ENCODE measurements at regions of chr20 and their contacts with region 1.

Region 1: DNA sequence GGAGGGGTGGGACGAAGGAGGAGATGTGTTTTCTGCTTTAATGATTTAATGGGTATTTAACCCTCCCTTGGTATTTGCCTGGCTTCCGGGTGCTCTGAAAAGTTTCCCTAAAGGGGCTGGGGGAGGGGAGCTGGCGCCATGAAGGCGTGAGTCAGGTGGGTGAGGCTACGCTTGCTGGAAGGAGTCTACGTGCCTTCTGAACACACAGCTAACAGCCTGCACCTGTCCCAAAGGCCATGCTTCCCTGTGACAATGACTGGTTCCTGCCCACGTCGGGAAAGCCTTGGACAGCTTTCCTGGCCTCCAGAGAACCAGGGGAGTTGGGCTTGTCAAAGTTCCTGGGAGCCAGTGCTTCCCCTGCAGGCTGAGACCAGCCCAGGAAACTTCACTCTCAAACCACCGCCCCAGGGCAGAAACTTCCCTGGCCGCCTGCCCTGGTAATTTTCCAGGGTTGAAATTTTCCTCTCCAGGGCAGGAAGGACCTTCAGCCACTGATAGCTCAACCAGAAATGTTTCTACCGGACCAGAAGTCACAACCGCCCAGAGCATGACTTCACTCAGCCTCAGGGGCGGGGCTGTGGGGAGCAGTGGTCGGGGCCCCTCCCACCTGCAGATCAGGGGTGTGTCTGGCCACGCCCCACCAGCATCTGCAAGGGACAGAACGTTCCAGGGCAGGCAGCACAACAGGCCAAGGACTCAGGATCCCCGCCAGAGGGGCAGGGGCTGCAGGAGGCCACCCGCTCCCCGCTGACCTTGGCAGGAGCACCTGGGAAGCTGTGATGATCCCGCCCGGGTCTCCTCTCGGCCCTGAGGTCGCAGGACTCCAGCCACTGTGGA is 18.6 kb upstream of the SLCO4A1 start:
- DNase-seq: peak; percentile 83 to 90 (median 87)
- H3K4me3 ChIP-seq: peak overlapping the region in 4 of 7 experiments; percentile 48 to 57 (median 49)
- H3K27ac ChIP-seq: peak overlapping the region; percentile 74 to 86
- H3K4me1 ChIP-seq: peaks cover 0 to 77% (median 71%) of the 10 kb centered on the region in 4 experiments
- H3K27me3 ChIP-seq: no peaks in the 10 kb centered on the region

Region 2: DNA sequence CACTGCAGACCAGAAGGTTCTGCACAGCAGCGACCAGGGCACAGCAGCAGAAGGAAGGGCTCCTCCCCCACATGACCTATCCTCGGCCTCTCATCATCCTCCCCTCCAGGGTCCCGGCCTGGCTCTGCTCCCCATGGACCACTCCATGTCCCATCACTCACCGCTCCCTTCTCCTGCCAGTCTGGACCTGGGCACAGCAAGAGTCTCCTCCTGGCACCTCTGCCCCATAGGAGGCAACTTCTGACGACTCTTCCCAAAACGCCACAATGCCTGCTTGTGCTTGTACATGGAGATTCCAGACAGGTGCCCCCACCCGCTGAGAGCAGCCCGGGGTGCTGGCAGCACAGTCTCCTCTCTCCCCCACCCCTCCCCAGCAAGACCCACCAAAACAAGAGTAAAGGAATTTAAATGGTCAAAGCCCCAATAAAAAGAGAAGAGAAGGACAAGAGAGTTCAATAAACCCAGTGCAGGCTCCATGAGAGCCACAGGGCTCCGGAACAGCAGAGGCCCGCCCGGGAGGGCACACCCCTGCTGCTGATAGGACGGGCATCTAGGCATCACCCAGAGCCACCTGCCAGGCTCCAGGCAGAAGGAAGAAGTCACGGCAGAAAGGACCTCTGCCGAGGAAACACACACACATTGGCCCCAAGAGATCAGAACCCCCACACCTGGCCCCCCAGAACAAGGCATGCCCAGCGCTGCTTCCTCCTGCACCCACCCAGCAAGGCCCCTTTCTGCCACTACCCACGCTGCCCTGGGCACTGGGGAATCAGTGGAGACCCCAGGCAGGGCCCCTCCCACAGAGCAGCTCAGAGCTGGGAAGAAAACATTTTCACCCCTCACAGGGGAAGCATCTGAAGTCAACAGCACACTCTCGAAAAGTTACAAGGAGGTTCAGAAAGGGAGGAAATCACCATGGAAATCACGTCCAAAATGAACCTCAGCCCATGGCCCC is 573.3 kb before region 1 on chr20:
- CTCF ChIA-PET with region 1: no interaction called
- POLR2A ChIA-PET with region 1: no interaction called
- DNase-seq: no peak
- H3K4me3 ChIP-seq: no peak overlapping the region
- H3K27ac ChIP-seq: no peak overlapping the region
- H3K4me1 ChIP-seq: peaks cover 0 to 24% (median 19%) of the 10 kb centered on the region in 4 experiments
- H3K27me3 ChIP-seq: no peaks in the 10 kb centered on the region

Region 3: GRCh38 chr20:62636446-62636845 is 12.7 kb after region 1 on chr20:
- CTCF ChIA-PET with region 1: interaction called, 36 read pairs
- POLR2A ChIA-PET with region 1: interaction called, 31 read pairs
- DNase-seq: peak in 2 of 3 donors; percentile 63 to 73
- H3K4me3 ChIP-seq: peak overlapping the region in 3 of 7 experiments; percentile 20 to 50 (median 32)
- H3K27ac ChIP-seq: no peak overlapping the region
- H3K4me1 ChIP-seq: peaks cover 0 to 45% (median 41%) of the 10 kb centered on the region in 4 experiments
- H3K27me3 ChIP-seq: no peaks in the 10 kb centered on the region

Region 4: GRCh38 chr20:62642040-62642665 is 18.4 kb after region 1 on chr20 and contains the start of gene SLCO4A1:
- CTCF ChIA-PET with region 1: interaction called, 36 read pairs
- POLR2A ChIA-PET with region 1: interaction called, 31 read pairs
- DNase-seq: peak; percentile 72 to 88 (median 84)
- H3K4me3 ChIP-seq: peak within 1 kb of the TSS; percentile 54 to 82 (median 67)
- H3K27ac ChIP-seq: peak within 1 kb of the TSS in 1 of 2 experiments; percentile 51
- H3K4me1 ChIP-seq: peaks cover 0 to 63% (median 58%) of the 10 kb centered on the region in 4 experiments
- H3K27me3 ChIP-seq: no peaks in the 10 kb centered on the region

Region 5: GRCh38 chr20:62652051-62652926 is 28.6 kb after region 1 on chr20:
- CTCF ChIA-PET with region 1: interaction called, 23 read pairs
- POLR2A ChIA-PET with region 1: interaction called, 16 read pairs
- DNase-seq: peak; percentile 52 to 72 (median 70)
- H3K4me3 ChIP-seq: peak overlapping the region in 5 of 7 experiments; percentile 12 to 64 (median 29)
- H3K27ac ChIP-seq: peak overlapping the region in 1 of 2 experiments; percentile 66
- H3K4me1 ChIP-seq: peaks cover 3 to 62% (median 32%) of the 10 kb centered on the region in 4 experiments
- H3K27me3 ChIP-seq: no peaks in the 10 kb centered on the region

Measured in common myeloid progenitor, CD34-positive (primary cell).